Activated CD4-positive, alpha-beta T cell treated with anti-CD3 and anti-CD28 coated beads for 36 hours (primary cell): ENCODE measurements at regions of chr15 and their contacts with region 1.

Region 1: GRCh38 chr15:42800731-42801474 is 64.0 kb upstream of the CDAN1 start:
- DNase-seq: peak; percentile 31
- ATAC-seq: no peak
- H3K4me3 Mint-ChIP-seq: no peak overlapping the region
- H3K27ac Mint-ChIP-seq: no peak overlapping the region
- H3K4me1 Mint-ChIP-seq: no peaks in the 10 kb centered on the region
- H3K27me3 Mint-ChIP-seq: no peaks in the 10 kb centered on the region

Region 2: GRCh38 chr15:42474827-42475226 is 326.1 kb before region 1 on chr15:
- CTCF ChIA-PET with region 1: no interaction called
- POLR2A ChIA-PET with region 1: no interaction called
- intact Hi-C with region 1: no loop called
- DNase-seq: no peak
- ATAC-seq: no peak
- H3K4me3 Mint-ChIP-seq: no peak overlapping the region
- H3K27ac Mint-ChIP-seq: no peak overlapping the region
- H3K4me1 Mint-ChIP-seq: peaks cover 10% of the 10 kb centered on the region
- H3K27me3 Mint-ChIP-seq: no peaks in the 10 kb centered on the region

Region 3: GRCh38 chr15:42929306-42929848 is 128.5 kb after region 1 on chr15:
- CTCF ChIA-PET with region 1: interaction called, 19 read pairs
- POLR2A ChIA-PET with region 1: no interaction called
- intact Hi-C with region 1: loop called (anchors 1 to 5 kb)
- DNase-seq: no peak
- ATAC-seq: no peak
- H3K4me3 Mint-ChIP-seq: no peak overlapping the region
- H3K27ac Mint-ChIP-seq: no peak overlapping the region
- H3K4me1 Mint-ChIP-seq: no peaks in the 10 kb centered on the region
- H3K27me3 Mint-ChIP-seq: no peaks in the 10 kb centered on the region